GM10248 (cell line): ENCODE measurements at regions of chr13 and their contacts with region 1.

Region 1: GRCh38 chr13:77415253-77416071 is 88.6 kb upstream of the MYCBP2 start:
- DNase-seq: peak; percentile 20
- CTCF ChIP-seq: no peak

Region 2: GRCh38 chr13:77425705-77426104 is 10.2 kb after region 1 on chr13:
- CTCF ChIA-PET with region 1: interaction called, 47 read pairs
- POLR2A ChIA-PET with region 1: no interaction called
- DNase-seq: no peak
- CTCF ChIP-seq: no peak